HepG2 (cell line): ENCODE measurements at regions of chr17 and their contacts with region 1.

Region 1: GRCh38 chr17:8275421-8276290 is 12.8 kb upstream of the RANGRF start:
- DNase-seq: no peak
- ATAC-seq: peak; percentile 48
- H3K4me3 ChIP-seq: no peak overlapping the region; a peak in 1 of 6 replicates
- H3K27ac ChIP-seq: peak overlapping the region; percentile 81
- H3K4me1 ChIP-seq: peaks cover 54% of the 10 kb centered on the region
- H3K27me3 ChIP-seq: no peaks in the 10 kb centered on the region
- CTCF ChIP-seq: peak; percentile 28; the same call in 1 of the 2 replicates
- EP300 ChIP-seq: no peak
- POLR2A ChIP-seq: no peak
- RAD21 ChIP-seq: no peak

Region 2: GRCh38 chr17:8288336-8289102 is 12.9 kb after region 1 on chr17 and contains the start of gene RANGRF:
- CTCF ChIA-PET with region 1: no interaction called
- POLR2A ChIA-PET with region 1: interaction called, 14 read pairs
- in situ Hi-C with region 1: no loop called
- intact Hi-C with region 1: no loop called
- DNase-seq: peak; percentile 77
- ATAC-seq: peak; percentile 87
- H3K4me3 ChIP-seq: peak within 1 kb of the TSS; percentile 76 to 86 (median 78)
- H3K27ac ChIP-seq: peak within 1 kb of the TSS; percentile 76
- H3K4me1 ChIP-seq: peaks cover 57% of the 10 kb centered on the region
- H3K27me3 ChIP-seq: no peaks in the 10 kb centered on the region
- CTCF ChIP-seq: no peak
- EP300 ChIP-seq: no peak
- POLR2A ChIP-seq: peak; percentile 59 to 86
- RAD21 ChIP-seq: no peak; the same call in 1 of the 2 replicates
- total RNA-seq, gene RANGRF: 18.6 and 21.3 TPM in 2 replicates

Region 3: DNA sequence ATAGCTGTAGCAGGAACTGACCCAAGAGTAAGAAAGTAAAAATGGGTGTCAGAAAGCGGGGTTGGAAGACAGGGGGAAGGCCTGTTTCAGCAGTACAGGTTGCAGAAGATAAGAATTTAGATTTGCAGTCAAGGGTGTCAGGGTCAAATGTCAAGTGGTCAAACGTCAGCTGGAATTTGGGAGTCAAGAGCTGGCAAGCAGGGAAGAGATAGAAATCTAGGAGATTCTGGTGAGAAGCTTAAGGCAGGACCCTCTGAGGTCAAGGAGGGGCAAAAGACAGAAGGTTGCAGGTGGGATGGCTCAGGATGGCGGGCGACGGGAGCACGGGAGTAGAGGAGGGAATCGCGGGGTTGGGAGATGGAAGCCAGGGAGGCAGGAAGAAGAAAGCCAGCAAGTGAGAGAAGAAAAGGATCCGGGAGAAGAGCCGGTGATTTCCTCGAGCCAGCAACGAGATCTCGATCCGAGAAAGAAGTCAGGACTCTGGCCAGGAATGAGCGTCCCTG is 19.2 kb after region 1 on chr17:
- CTCF ChIA-PET with region 1: no interaction called
- POLR2A ChIA-PET with region 1: interaction called, 13 read pairs
- in situ Hi-C with region 1: no loop called
- intact Hi-C with region 1: no loop called
- DNase-seq: no peak
- ATAC-seq: peak; percentile 18
- H3K4me3 ChIP-seq: peak overlapping the region; percentile 60 to 79 (median 72)
- H3K27ac ChIP-seq: peak overlapping the region; percentile 88
- H3K4me1 ChIP-seq: peaks cover 45% of the 10 kb centered on the region
- H3K27me3 ChIP-seq: no peaks in the 10 kb centered on the region
- CTCF ChIP-seq: no peak
- EP300 ChIP-seq: no peak
- POLR2A ChIP-seq: peak in 1 of 2 experiments; percentile 67; a peak in 2 of 4 replicates
- RAD21 ChIP-seq: no peak